Posterior vena cava (tissue), 2 donors: ENCODE measurements at regions of chr11 and their contacts with region 1.

Region 1: GRCh38 chr11:88523379-88524071 is 186.0 kb upstream of the CTSC start:
- DNase-seq: no peak

Region 2: DNA sequence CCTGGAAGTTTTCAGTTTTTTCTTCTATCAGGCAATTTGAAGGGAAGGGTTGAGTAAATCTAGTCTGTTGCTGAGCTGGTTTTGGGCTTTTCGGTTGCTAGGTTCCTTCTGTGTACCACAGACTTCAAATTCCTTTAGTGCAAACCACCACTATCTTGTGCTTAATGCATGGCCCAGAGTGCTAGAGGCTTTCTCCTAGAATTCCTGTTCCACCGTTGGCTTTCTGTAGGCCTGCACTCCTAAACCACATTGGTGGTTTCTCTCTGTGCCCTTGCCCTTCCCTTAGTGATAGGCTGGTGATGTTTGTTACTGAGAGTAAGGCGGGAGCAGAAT is 138.9 kb before region 1 on chr11:
- intact Hi-C with region 1: loop called in 1 of 2 experiments (anchors 5 kb)
- DNase-seq: no peak